CD4-positive, alpha-beta memory T cell (primary cell): ENCODE measurements at regions of chr7 and their contacts with region 1.

Region 1: GRCh38 chr7:66740302-66740979 is at the start of gene RABGEF1:
- DNase-seq: peak; percentile 95 to 98 (median 96)
- H3K4me3 ChIP-seq: peak within 1 kb of the TSS; percentile 40 to 76
- H3K4me3 Mint-ChIP-seq: peak within 1 kb of the TSS; percentile 91 to 98 (median 94)
- H3K27ac ChIP-seq: peak within 1 kb of the TSS; percentile 85
- H3K27ac Mint-ChIP-seq: peak within 1 kb of the TSS; percentile 95 to 99 (median 97)
- H3K4me1 ChIP-seq: peaks cover 16% of the 10 kb centered on the region
- H3K4me1 Mint-ChIP-seq: peaks cover 15 to 55% (median 38%) of the 10 kb centered on the region in 4 donors
- H3K27me3 ChIP-seq: no peaks in the 10 kb centered on the region
- H3K27me3 Mint-ChIP-seq: no peaks in the 10 kb centered on the region
- total RNA-seq, gene RABGEF1: 23.0 to 28.6 TPM

Region 2: DNA sequence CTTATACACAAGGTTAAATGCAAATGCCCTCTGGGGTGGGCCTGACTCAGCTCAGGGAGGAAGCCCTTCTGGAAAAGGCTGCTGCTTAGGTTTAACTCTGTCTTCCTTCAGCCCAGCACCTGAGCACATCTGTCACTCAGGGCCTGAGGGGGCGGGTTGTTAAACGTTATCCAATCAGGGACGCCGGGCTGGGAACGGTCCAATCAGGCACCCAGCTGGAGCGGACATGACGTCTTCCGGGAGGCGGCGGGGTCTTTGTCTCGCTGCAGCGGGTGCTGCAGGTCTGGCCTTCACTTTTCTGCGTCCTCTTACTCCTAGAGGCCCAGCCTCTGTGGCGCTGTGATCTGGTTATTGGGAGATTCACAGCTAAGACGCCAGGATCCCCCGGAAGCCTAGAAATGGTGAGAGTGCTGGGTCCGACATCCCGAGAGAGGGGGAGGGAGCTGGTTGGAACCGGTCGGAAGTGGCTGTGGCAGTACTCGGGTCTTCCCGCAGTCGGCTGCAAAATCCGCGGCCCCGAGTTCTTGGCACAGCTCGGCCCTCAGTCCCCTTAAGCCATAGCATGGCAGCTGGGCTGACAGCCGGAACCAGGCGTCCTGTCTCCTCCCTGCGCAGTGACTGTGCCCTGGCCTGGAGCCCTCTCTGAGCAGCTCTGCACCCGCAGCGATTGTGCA is 1946.1 kb before region 1 on chr7 and contains the start of gene ZNF138:
- CTCF ChIA-PET with region 1: no interaction called
- POLR2A ChIA-PET with region 1: no interaction called
- intact Hi-C with region 1: loop called (anchors 10 kb)
- DNase-seq: peak; percentile 92 to 95 (median 93)
- H3K4me3 ChIP-seq: peak within 1 kb of the TSS; percentile 87 to 95
- H3K4me3 Mint-ChIP-seq: peak within 1 kb of the TSS; percentile 97 to 99 (median 99)
- H3K27ac ChIP-seq: peak within 1 kb of the TSS; percentile 75
- H3K27ac Mint-ChIP-seq: peak within 1 kb of the TSS; percentile 97 to 99 (median 98)
- H3K4me1 ChIP-seq: peaks cover 27% of the 10 kb centered on the region
- H3K4me1 Mint-ChIP-seq: peaks cover 18 to 47% (median 30%) of the 10 kb centered on the region in 4 donors
- H3K27me3 ChIP-seq: no peaks in the 10 kb centered on the region
- H3K27me3 Mint-ChIP-seq: no peaks in the 10 kb centered on the region
- total RNA-seq, gene ZNF138: 12.1 to 14.3 TPM

Region 3: DNA sequence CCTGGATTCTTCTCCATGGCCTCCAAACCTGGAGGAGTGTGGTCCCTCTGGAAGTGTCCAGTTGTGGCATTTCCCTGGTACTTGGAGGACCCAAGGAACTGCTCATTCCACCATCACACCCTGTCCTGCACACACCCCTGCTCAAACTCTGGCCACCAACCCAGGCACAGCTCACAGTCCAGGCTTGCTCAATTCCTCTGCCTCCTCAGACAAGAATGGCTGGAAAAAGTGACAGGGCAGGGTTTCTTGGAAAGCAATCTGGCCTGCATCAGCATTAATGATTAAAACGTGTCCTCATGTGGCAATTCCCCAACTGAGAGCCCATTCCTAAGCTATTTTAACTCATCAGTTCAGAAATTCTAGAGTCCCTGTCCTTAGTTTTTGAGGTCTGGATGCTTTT is 552.5 kb before region 1 on chr7:
- CTCF ChIA-PET with region 1: no interaction called
- POLR2A ChIA-PET with region 1: no interaction called
- intact Hi-C with region 1: no loop called
- DNase-seq: no peak
- H3K4me3 ChIP-seq: no peak overlapping the region
- H3K4me3 Mint-ChIP-seq: no peak overlapping the region
- H3K27ac ChIP-seq: no peak overlapping the region
- H3K27ac Mint-ChIP-seq: no peak overlapping the region
- H3K4me1 ChIP-seq: no peaks in the 10 kb centered on the region
- H3K4me1 Mint-ChIP-seq: no peaks in the 10 kb centered on the region
- H3K27me3 ChIP-seq: no peaks in the 10 kb centered on the region
- H3K27me3 Mint-ChIP-seq: peaks cover 2 to 3% of the 10 kb centered on the region in 2 donors

Region 4: DNA sequence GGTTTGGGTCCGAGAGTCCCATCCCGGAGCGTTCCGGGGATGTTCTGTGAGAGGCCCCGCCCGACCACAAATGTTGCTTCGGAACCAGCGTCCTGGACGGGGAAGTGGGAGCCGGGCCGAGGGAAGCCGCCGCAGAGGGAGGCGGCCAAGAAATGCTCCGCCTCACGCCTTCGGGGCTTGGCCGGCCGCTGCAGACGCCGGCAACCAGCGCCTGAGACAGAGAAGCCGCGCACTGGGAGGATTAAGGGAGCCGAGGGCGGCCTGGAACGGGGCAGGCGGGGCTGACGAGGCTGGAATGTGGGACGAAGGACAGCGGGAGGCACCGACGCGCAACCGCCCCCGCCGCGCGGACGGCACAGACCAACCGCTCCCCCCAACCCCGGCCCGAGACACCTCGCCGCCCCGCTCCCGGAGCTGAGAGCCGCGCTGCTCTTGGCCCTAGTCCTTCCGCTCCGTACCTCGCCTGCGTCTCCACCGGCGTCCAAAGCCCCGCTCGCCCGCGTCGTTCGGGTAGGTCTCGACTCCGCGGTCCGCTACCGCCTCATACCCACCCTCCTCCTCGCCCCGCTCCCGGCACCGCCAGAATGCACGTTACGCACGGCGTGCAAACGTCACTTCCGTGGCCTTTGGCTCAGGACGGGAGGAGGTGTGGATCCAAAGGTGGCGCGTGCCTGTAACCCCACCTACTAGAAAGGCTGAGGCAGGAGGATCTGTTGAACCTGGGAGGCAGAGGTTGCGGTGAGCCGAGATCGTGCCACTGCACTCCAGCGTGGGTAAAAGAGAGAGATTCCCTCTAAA is 148.4 kb before region 1 on chr7:
- CTCF ChIA-PET with region 1: no interaction called
- POLR2A ChIA-PET with region 1: interaction called, 3 read pairs
- intact Hi-C with region 1: loop called (anchors 1 kb)
- DNase-seq: peak; percentile 85 to 93 (median 88)
- H3K4me3 ChIP-seq: peak overlapping the region; percentile 57 to 94
- H3K4me3 Mint-ChIP-seq: peak overlapping the region; percentile 96 to 99 (median 97)
- H3K27ac ChIP-seq: peak overlapping the region; percentile 80
- H3K27ac Mint-ChIP-seq: peak overlapping the region; percentile 95 to 99 (median 98)
- H3K4me1 ChIP-seq: peaks cover 48% of the 10 kb centered on the region
- H3K4me1 Mint-ChIP-seq: peaks cover 31 to 61% (median 46%) of the 10 kb centered on the region in 4 donors
- H3K27me3 ChIP-seq: no peaks in the 10 kb centered on the region
- H3K27me3 Mint-ChIP-seq: no peaks in the 10 kb centered on the region

Region 5: GRCh38 chr7:66654123-66654732 is 86.2 kb before region 1 on chr7:
- CTCF ChIA-PET with region 1: no interaction called
- POLR2A ChIA-PET with region 1: interaction called, 11 read pairs
- intact Hi-C with region 1: loop called (anchors 1 kb)
- DNase-seq: peak; percentile 97 to 99 (median 98)
- H3K4me3 ChIP-seq: peak overlapping the region; percentile 90 to 91
- H3K4me3 Mint-ChIP-seq: peak overlapping the region; percentile 96 to 99 (median 97)
- H3K27ac ChIP-seq: peak overlapping the region; percentile 95
- H3K27ac Mint-ChIP-seq: peak overlapping the region; percentile 99
- H3K4me1 ChIP-seq: peaks cover 17% of the 10 kb centered on the region
- H3K4me1 Mint-ChIP-seq: peaks cover 10 to 33% (median 24%) of the 10 kb centered on the region in 4 donors
- H3K27me3 ChIP-seq: no peaks in the 10 kb centered on the region
- H3K27me3 Mint-ChIP-seq: no peaks in the 10 kb centered on the region

Region 6: GRCh38 chr7:66844552-66845378 is 104.3 kb after region 1 on chr7:
- CTCF ChIA-PET with region 1: interaction called, 3 read pairs
- POLR2A ChIA-PET with region 1: interaction called, 11 read pairs
- intact Hi-C with region 1: loop called (anchors 1 kb)
- DNase-seq: peak; percentile 97 to 100 (median 100)
- H3K4me3 ChIP-seq: peak overlapping the region; percentile 78 to 92
- H3K4me3 Mint-ChIP-seq: peak overlapping the region; percentile 90 to 100 (median 96)
- H3K27ac ChIP-seq: peak overlapping the region; percentile 95
- H3K27ac Mint-ChIP-seq: peak overlapping the region; percentile 98 to 100 (median 100)
- H3K4me1 ChIP-seq: peaks cover 20% of the 10 kb centered on the region
- H3K4me1 Mint-ChIP-seq: peaks cover 8 to 30% (median 19%) of the 10 kb centered on the region in 4 donors
- H3K27me3 ChIP-seq: no peaks in the 10 kb centered on the region
- H3K27me3 Mint-ChIP-seq: peaks cover 3 to 4% of the 10 kb centered on the region in 2 donors